AG04450 (cell line): ENCODE measurements at regions of chr5 and their contacts with region 1.

Region 1: DNA sequence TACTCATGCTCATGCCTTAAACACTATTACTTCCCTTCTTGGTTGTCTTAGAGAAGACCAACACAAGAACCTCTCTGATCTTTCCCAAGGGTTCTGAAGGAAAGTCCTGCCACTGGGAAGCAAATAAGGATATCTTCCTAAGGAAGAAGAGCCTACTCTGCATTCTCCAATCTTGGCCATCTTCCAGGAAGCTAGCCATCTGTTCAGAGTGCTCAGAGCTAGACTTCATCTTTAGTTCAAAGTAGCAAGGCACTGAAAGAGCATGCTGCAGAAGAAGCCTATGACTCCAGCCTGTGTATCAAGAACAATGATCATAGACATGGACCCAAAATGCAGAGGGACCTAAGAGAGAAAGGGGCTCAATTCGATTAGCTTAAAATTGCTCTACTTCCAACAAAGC is 114.7 kb downstream of the KIAA0825 start:
- DNase-seq: no peak
- H3K4me3 ChIP-seq: no peak overlapping the region
- H3K27ac ChIP-seq: no peak overlapping the region
- H3K27me3 ChIP-seq: no peaks in the 10 kb centered on the region
- CTCF ChIP-seq: no peak

Region 2: GRCh38 chr5:94524841-94525697 is 21.4 kb after region 1 on chr5:
- CTCF ChIA-PET with region 1: interaction called, 15 read pairs
- POLR2A ChIA-PET with region 1: no interaction called
- DNase-seq: no peak
- H3K4me3 ChIP-seq: no peak overlapping the region
- H3K27ac ChIP-seq: no peak overlapping the region
- H3K27me3 ChIP-seq: no peaks in the 10 kb centered on the region
- CTCF ChIP-seq: peak; percentile 49